WTC11 (cell line): ENCODE measurements at regions of chr3 and their contacts with region 1.

Region 1: DNA sequence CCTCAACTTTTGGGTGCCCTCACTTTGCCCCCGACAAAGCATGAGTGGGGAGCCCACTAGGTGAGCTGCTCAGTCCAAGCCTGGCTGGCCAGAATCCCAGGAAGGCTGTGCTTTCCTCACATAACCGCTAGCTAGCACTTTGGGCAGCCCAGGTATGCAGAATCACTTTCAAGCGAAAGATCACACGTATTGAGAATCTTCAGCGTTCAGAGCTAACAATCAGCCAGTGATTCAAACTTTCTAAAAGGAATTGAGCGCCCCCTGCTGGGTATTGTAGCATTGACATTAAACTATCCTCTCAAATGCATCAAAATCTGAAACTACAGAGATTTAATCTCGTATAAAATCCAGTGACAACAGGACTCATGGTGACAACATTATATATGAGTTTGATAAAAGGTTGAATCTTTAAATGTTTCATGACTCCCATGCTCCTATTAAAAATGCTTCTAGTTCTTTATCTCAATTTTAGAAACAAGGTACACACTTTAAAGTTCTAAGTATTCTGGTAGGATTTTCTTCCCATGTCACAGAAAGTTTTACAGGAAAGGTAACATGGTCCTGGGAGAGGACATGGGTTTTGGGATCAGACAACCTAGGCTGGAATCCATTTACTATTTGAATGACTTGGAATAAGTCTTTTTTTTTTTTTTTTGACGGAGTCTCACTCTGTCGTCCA is 11.8 kb downstream of the ANAPC13 start:
- DNase-seq: peak; percentile 78
- ATAC-seq: peak; percentile 94
- H3K4me3 Mint-ChIP-seq: no peak overlapping the region
- H3K27ac Mint-ChIP-seq: no peak overlapping the region
- H3K4me1 Mint-ChIP-seq: 0 out of 2 replicates have a peak, but pooled peaks cover 3% of the 10 kb centered on the region
- H3K27me3 Mint-ChIP-seq: no peaks in the 10 kb centered on the region
- CTCF ChIP-seq: peak; percentile 57

Region 2: GRCh38 chr3:133979553-133979952 is 494.5 kb before region 1 on chr3:
- CTCF ChIA-PET with region 1: no interaction called
- POLR2A ChIA-PET with region 1: no interaction called
- DNase-seq: no peak
- ATAC-seq: no peak
- H3K4me3 Mint-ChIP-seq: no peak overlapping the region
- H3K27ac Mint-ChIP-seq: no peak overlapping the region
- H3K4me1 Mint-ChIP-seq: peaks cover 20% of the 10 kb centered on the region
- H3K27me3 Mint-ChIP-seq: peaks cover 4% of the 10 kb centered on the region
- CTCF ChIP-seq: no peak

Region 3: GRCh38 chr3:134299185-134299887 is 174.7 kb before region 1 on chr3:
- CTCF ChIA-PET with region 1: interaction called, 10 read pairs
- POLR2A ChIA-PET with region 1: no interaction called
- DNase-seq: no peak
- ATAC-seq: peak; percentile 76
- H3K4me3 Mint-ChIP-seq: no peak overlapping the region
- H3K27ac Mint-ChIP-seq: no peak overlapping the region
- H3K4me1 Mint-ChIP-seq: peaks cover 2% of the 10 kb centered on the region; the same call in 1 of the 2 replicates
- H3K27me3 Mint-ChIP-seq: no peaks in the 10 kb centered on the region
- CTCF ChIP-seq: no peak

Region 4: DNA sequence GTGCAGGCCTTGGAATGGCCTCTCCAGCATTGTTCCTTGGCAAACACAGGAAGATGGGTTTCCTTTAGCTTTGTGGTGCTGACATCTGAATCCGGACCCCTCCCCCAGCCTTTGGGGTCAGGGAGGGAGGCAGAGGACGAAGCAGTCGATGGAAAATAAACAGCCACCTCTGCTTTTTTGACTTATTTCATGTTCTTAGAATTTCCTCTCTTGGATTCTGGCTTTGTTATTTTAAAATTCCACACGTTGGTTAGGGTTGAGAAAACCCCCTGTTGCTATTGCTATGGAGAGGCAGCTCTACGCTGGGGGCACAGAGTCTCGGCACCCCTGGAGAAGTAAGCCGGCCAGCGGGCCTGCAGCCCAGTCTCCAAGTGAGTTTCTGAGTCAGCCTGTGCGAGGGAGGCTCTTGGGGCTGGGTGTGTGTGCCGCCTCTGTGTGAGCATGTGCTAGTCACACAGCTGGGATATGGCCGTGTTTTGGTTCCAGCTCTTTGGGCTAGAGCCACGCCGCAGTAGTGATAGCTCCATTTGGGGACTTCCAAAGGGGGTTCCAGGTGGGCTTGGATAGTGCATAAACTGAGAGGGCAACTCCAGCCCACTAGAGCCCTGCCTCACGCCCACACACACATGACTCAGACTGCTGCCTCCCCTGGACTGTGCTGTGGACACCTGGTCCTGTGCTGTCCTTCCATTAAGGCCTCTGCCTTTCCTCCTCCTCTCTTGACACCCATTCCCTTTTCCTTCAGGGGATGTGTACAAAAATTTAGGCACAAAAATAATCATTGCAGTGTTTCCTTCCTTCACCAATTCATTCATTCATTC is 158.5 kb before region 1 on chr3:
- CTCF ChIA-PET with region 1: interaction called, 86 read pairs
- POLR2A ChIA-PET with region 1: interaction called, 4 read pairs
- DNase-seq: peak; percentile 40
- ATAC-seq: no peak
- H3K4me3 Mint-ChIP-seq: no peak overlapping the region; the same call in 1 of the 2 replicates
- H3K27ac Mint-ChIP-seq: no peak overlapping the region
- H3K4me1 Mint-ChIP-seq: peaks cover 26% of the 10 kb centered on the region
- H3K27me3 Mint-ChIP-seq: peaks cover 20% of the 10 kb centered on the region
- CTCF ChIP-seq: no peak

Region 5: DNA sequence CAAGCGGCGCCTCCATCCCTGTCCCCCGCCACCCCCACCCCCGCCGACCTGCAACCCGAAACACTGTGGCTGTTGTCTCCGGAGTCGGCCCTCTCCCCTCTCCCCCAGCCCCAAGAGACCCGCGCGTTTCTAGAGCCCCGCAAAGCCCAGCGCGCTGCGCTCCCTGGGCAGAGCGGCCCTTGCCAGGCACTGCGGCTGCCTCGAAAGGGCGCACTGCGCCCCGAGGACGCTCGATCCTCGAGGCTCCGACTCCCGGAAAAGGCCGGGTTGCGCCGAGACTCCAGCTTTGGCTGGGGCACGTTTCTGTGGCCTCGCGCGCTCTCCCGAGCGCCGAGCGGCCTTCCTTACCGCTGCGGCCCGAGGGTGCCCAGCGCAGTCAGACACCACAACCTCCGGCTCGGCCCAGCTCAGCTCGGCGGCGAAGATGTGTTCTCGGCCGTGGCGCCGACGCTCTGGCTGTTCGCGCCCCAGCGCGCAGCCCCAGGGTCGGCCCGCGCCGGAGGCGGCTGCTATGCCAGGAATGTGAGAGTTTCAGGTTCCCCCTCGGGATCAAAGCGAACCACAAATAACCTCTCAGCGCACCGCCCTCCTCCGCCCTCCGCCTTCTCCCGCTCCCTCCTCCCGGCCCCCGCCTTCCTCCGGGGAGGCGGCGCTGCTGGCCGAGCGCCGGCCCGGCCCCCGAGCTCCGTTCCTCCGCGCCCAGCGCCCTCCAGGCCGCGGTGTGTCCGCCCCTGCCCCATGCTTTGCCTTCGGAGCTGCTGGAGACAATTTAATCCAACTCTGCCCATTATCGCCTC is 99.8 kb before region 1 on chr3 and contains the start of gene AMOTL2:
- CTCF ChIA-PET with region 1: interaction called, 64 read pairs
- POLR2A ChIA-PET with region 1: interaction called, 5 read pairs
- DNase-seq: peak; percentile 95
- ATAC-seq: peak; percentile 65
- H3K4me3 Mint-ChIP-seq: peak within 1 kb of the TSS; percentile 82
- H3K27ac Mint-ChIP-seq: peak within 1 kb of the TSS; percentile 98
- H3K4me1 Mint-ChIP-seq: peaks cover 70% of the 10 kb centered on the region
- H3K27me3 Mint-ChIP-seq: peaks cover 31% of the 10 kb centered on the region
- CTCF ChIP-seq: no peak
- total RNA-seq, gene AMOTL2: 76.9 to 85.4 TPM (median 79.9 TPM) in 3 replicates

Region 6: GRCh38 chr3:134485075-134485717 is 11.2 kb after region 1 on chr3:
- CTCF ChIA-PET with region 1: interaction called, 12 read pairs
- POLR2A ChIA-PET with region 1: no interaction called
- DNase-seq: no peak
- ATAC-seq: peak; percentile 8
- H3K4me3 Mint-ChIP-seq: peak overlapping the region; percentile 88
- H3K27ac Mint-ChIP-seq: peak overlapping the region; percentile 89
- H3K4me1 Mint-ChIP-seq: peaks cover 23% of the 10 kb centered on the region
- H3K27me3 Mint-ChIP-seq: no peaks in the 10 kb centered on the region
- CTCF ChIP-seq: no peak